RWPE1 (cell line): ENCODE measurements at regions of chr11 and their contacts with region 1.

Region 1: DNA sequence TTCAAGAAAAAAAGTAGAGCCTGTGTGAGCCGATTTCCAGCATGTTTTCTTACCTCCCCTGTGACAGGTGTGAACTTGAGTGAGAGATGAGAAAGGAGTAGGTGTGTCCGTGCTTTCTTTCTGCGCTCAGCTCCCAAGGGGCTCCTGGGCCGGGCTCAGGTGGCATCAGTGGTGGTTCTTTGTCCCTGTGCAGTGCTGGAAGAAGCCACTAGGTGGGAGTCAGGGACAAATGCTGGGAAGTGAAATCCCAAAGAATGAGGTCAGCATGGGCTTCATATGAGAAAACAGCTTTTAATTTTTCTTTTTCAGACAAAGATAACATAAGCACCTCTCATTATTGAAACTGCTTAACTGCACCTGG is 57.8 kb downstream of the PPFIBP2 start:
- DNase-seq: peak; percentile 71
- H3K27ac ChIP-seq: no peak overlapping the region
- CTCF ChIP-seq: peak; percentile 93

Region 2: DNA sequence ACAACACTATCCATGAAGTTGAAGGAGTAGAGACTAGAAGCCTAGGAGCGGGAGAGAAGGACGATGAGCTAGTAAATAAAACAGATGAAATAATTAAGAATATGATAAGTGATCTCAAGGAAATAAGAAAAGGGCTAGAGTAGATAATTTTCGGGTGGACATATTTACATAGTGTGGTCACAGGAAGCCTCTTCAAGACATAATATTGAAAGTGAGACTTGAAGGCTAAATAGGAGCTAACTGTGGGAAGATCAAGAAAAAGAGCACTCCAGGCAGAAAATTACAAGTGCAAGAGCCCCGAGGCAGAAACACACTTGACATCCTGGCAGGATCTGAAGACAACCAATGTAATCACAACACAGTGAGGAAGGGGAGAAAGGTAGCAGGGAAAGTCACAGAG is 69.7 kb before region 1 on chr11:
- CTCF ChIA-PET with region 1: no interaction called
- POLR2A ChIA-PET with region 1: no interaction called
- DNase-seq: no peak
- H3K27ac ChIP-seq: no peak overlapping the region
- CTCF ChIP-seq: no peak

Region 3: GRCh38 chr11:7513234-7514098 is 58.2 kb before region 1 on chr11 and contains the start of gene PPFIBP2:
- CTCF ChIA-PET with region 1: interaction called, 10 read pairs
- POLR2A ChIA-PET with region 1: no interaction called
- DNase-seq: peak; percentile 90
- H3K27ac ChIP-seq: peak within 1 kb of the TSS; percentile 71
- CTCF ChIP-seq: peak; percentile 75

Region 4: GRCh38 chr11:7630002-7630401 is 58.4 kb after region 1 on chr11:
- CTCF ChIA-PET with region 1: interaction called, 14 read pairs
- POLR2A ChIA-PET with region 1: no interaction called
- DNase-seq: no peak
- H3K27ac ChIP-seq: no peak overlapping the region
- CTCF ChIP-seq: no peak

Region 5: DNA sequence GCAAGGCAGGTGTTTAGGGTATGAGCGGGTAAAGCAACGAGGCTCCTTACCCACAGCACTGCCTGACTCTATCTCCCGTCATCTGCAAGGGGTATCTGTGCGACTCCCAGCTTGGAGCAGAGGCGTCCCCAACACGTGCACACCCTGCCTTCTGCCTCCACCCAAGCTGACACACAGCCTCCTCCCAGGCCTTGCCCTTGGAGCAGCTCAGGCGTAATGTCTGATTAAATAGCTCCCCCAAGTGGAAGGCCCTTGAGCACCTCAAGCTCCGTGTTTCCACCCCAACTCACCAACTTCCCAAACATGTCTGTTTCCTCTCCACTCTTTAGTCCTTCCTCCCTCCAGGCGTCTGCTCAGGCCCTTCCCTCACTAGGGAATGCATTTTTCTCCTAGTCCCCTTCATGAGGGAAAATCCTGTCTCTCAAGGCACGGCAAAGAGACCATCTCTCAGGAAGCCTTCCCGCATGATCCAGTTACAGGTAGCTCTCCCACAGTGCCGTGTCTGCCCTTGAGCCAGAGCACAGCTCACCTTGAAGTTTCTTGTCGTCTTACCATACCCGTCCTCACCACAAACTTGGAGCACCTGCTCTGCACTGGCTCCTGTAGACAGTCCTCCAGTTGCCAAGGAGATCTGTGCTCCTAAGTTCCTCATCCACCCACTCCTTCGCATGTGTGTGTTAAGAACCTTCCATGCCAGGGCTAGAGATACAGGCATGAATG is 85.8 kb after region 1 on chr11:
- CTCF ChIA-PET with region 1: interaction called, 69 read pairs
- POLR2A ChIA-PET with region 1: interaction called, 4 read pairs
- DNase-seq: peak; percentile 60
- H3K27ac ChIP-seq: no peak overlapping the region
- CTCF ChIP-seq: peak; percentile 37

Region 6: GRCh38 chr11:7665473-7666291 is 94.1 kb after region 1 on chr11:
- CTCF ChIA-PET with region 1: interaction called, 43 read pairs
- POLR2A ChIA-PET with region 1: no interaction called
- DNase-seq: peak; percentile 88
- H3K27ac ChIP-seq: no peak overlapping the region
- CTCF ChIP-seq: peak; percentile 85